Endothelial cell of umbilical vein (primary cell): ENCODE measurements at regions of chr5 and their contacts with region 1.

Region 1: DNA sequence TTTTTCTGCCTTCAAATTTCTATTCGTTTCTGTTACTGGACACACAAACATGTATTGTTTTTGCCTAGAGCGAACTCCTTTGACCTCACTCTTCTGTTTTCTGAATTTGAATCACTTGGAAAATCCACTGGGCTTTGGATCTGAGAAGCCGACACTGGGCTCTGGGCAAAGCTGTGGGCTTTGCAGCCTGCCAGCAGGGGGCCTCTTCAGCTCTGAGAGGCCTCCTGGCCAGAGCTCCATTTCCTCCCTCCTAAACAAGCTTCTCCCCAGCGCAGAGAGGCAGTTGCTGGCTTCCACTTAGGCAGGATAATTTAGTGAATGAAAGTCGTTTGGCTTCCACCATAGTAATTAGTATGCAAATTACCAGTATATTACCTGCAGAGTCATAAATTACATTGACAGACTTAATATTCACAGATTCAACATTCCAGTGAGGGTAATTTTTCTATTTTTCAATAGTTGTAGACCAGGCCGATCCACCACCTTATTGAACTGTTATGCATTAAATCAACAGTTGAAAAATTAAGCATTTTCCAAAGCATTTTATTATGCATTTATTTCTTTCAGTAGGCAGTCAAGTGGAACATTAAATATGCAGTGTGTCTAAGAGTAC is 104.0 kb upstream of the ZNF366 start:
- DNase-seq: peak; percentile 85
- H3K4me3 ChIP-seq: no peak overlapping the region
- H3K27ac ChIP-seq: peak overlapping the region; percentile 23
- H3K4me1 ChIP-seq: peaks cover 5% of the 10 kb centered on the region
- H3K27me3 ChIP-seq: no peaks in the 10 kb centered on the region
- CTCF ChIP-seq: peak; percentile 98
- POLR2A ChIP-seq: no peak

Region 2: GRCh38 chr5:72531496-72532190 is 79.6 kb before region 1 on chr5:
- CTCF ChIA-PET with region 1: no interaction called
- POLR2A ChIA-PET with region 1: no interaction called
- dilution Hi-C with region 1: no loop called
- intact Hi-C with region 1: no loop called
- DNase-seq: peak; percentile 30
- H3K4me3 ChIP-seq: no peak overlapping the region
- H3K27ac ChIP-seq: no peak overlapping the region
- H3K4me1 ChIP-seq: no peaks in the 10 kb centered on the region
- H3K27me3 ChIP-seq: no peaks in the 10 kb centered on the region
- CTCF ChIP-seq: no peak
- POLR2A ChIP-seq: no peak

Region 3: GRCh38 chr5:72556351-72557166 is 54.7 kb before region 1 on chr5:
- CTCF ChIA-PET with region 1: interaction called, 34 read pairs
- POLR2A ChIA-PET with region 1: no interaction called
- dilution Hi-C with region 1: no loop called
- intact Hi-C with region 1: no loop called
- DNase-seq: peak; percentile 85
- H3K4me3 ChIP-seq: peak overlapping the region in 1 of 3 experiments; percentile 4
- H3K27ac ChIP-seq: peak overlapping the region; percentile 97
- H3K4me1 ChIP-seq: peaks cover 83% of the 10 kb centered on the region
- H3K27me3 ChIP-seq: no peaks in the 10 kb centered on the region
- CTCF ChIP-seq: no peak
- POLR2A ChIP-seq: peak; percentile 92

Region 4: DNA sequence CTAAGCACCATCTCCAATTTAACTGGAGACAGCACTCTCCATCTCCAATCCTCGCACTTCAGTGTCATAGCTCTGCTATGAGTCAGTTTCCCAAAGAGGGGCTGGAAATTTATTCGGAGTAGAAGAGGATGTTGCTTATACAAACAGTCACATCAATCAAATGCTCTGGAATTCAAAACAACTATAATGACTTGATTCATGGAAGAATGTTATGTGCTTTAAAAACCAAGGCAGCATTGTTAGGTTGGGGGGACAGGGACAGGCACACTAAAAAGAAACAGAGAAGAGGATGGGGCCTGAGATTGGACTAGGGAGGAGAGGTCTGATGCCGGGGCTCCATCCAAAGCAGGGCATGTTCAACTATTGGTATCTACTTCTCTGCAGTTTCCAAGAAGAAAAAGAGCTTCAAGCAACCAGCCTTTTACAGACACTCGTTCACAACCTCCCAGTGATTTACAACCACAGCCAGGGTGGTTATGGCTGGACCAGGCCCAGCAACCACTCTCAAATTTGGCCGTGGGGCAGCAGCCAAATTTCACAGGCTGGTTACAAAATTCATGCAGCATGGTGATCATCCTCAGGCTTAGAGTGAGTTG is 13.5 kb after region 1 on chr5:
- CTCF ChIA-PET with region 1: interaction called, 45 read pairs
- POLR2A ChIA-PET with region 1: no interaction called
- dilution Hi-C with region 1: no loop called
- intact Hi-C with region 1: no loop called
- DNase-seq: peak; percentile 83
- H3K4me3 ChIP-seq: peak overlapping the region in 1 of 3 experiments; percentile 34
- H3K27ac ChIP-seq: peak overlapping the region; percentile 68
- H3K4me1 ChIP-seq: peaks cover 19% of the 10 kb centered on the region
- H3K27me3 ChIP-seq: no peaks in the 10 kb centered on the region
- CTCF ChIP-seq: no peak
- POLR2A ChIP-seq: no peak

Region 5: DNA sequence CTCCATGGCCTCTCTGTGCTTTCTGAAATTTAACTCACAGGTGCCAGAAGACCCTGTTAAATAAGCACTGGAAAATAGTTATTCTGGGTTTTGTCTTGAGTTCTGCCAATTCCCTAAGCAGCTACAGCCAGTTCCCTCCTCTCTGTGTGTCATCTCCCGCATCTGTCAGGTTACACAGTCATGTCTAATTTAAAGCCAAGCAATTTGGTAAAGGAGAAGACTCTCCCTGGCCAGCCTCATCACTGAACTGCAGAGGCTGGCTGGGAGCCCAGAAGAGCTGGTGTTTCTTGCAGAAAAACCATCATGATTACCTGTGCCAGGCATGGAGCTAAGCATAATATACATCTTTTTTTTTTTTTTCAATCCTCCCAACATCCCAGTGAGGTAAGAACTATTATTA is 37.3 kb after region 1 on chr5:
- CTCF ChIA-PET with region 1: interaction called, 12 read pairs
- POLR2A ChIA-PET with region 1: no interaction called
- dilution Hi-C with region 1: no loop called
- intact Hi-C with region 1: no loop called
- DNase-seq: no peak
- H3K4me3 ChIP-seq: no peak overlapping the region
- H3K27ac ChIP-seq: no peak overlapping the region
- H3K4me1 ChIP-seq: no peaks in the 10 kb centered on the region
- H3K27me3 ChIP-seq: no peaks in the 10 kb centered on the region
- CTCF ChIP-seq: no peak
- POLR2A ChIP-seq: no peak

Region 6: DNA sequence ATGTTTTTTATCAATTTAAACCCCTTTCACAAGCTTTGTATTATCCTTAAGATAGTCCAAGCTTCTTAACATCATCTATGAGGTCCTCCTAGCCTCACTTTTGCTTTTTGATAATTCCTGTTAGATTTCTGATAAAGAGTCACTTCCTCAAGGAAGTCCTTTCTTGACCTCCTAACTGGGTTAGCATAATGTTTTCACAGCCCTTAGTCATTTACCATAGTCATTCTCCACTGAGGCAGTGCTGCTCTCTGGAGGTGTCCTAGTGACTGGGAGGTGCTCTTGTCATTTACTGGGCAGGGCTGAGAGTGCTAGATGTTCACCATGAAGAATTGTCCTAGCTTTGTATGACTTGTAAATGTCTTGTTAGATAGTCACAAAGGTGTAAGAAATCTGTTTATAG is 231.6 kb after region 1 on chr5:
- CTCF ChIA-PET with region 1: interaction called, 23 read pairs
- POLR2A ChIA-PET with region 1: no interaction called
- dilution Hi-C with region 1: no loop called
- intact Hi-C with region 1: no loop called
- DNase-seq: peak; percentile 92
- H3K4me3 ChIP-seq: peak overlapping the region in 1 of 3 experiments; percentile 25
- H3K27ac ChIP-seq: peak overlapping the region; percentile 95
- H3K4me1 ChIP-seq: peaks cover 70% of the 10 kb centered on the region
- H3K27me3 ChIP-seq: no peaks in the 10 kb centered on the region
- CTCF ChIP-seq: peak in 1 of 2 donors; percentile 11
- POLR2A ChIP-seq: no peak